Activated T-helper 2 cell treated with anti-CD3 and anti-CD28 coated beads, Interferon-gamma antibody, Interleukin-2, Interleukin-4, amounts not matched to agents 10 μg/mL and 5 μg/mL and 100 μg/mL, durations not matched to agents 14 hours and 24 hours and 36 hours (primary cell): ENCODE measurements at regions of chr2 and their contacts with region 1.

Region 1: GRCh38 chr2:54723131-54723995 is at the start of gene EML6:
- DNase-seq: peak; percentile 99
- H3K4me3 Mint-ChIP-seq: peak within 1 kb of the TSS; percentile 89
- H3K27ac Mint-ChIP-seq: peak within 1 kb of the TSS; percentile 64
- H3K4me1 Mint-ChIP-seq: peaks cover 17% of the 10 kb centered on the region
- H3K27me3 Mint-ChIP-seq: peaks cover 77% of the 10 kb centered on the region
- total RNA-seq, gene EML6: 0.23 and 0.25 TPM in 2 replicates

Region 2: DNA sequence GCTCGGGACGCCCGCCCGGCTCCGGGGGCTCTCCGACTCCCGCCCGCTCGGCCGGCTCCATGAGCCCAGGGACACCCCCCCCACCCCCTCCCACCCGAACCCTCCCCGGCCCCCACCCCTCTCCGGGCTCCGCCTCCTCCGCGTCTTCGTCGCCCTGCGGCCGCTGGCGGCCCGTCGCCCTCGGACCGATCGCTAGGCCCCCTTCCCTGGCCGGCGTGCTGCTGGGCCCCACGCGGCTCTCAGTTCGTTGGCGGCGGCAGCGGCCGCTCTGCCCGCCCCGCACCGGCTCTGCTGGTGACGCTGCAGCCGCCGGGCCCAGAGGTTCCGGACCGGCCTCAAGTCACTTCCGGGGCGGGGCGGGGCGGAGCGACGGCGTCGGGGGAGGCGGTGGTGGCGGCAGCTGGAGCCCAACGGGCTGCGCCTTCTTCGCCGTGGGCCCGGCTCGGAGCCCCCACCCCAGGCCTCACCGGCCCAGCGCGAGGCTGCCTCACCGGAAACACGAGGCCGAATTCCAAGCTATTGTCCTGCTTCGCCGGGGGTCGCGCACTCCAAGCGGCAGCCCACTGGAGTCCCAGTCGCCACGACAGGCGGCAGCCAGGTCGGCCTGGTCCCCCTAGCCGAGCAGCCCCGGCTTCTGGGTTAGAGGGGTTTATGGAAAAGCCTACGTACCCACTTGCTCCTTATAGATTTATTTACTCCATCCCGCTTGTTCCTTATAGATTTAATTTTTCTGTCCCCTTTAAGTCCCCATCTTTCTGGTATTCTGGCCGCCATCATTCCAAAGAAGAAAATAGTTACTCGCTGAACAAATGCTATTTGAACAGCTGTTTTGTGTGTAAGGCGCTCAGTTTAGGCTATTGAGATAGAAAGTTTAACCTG is 752.4 kb before region 1 on chr2 and contains the start of gene PSME4:
- intact Hi-C with region 1: loop called (anchors 5 kb)
- DNase-seq: peak; percentile 90
- H3K4me3 Mint-ChIP-seq: peak within 1 kb of the TSS; percentile 93
- H3K27ac Mint-ChIP-seq: peak within 1 kb of the TSS; percentile 96
- H3K4me1 Mint-ChIP-seq: peaks cover 30% of the 10 kb centered on the region
- H3K27me3 Mint-ChIP-seq: no peaks in the 10 kb centered on the region
- total RNA-seq, gene PSME4: 52.0 and 57.3 TPM in 2 replicates

Region 3: GRCh38 chr2:54330162-54330925 is 393.0 kb before region 1 on chr2:
- intact Hi-C with region 1: loop called (anchors 2 kb)
- DNase-seq: peak; percentile 85
- H3K4me3 Mint-ChIP-seq: peak overlapping the region; percentile 72
- H3K27ac Mint-ChIP-seq: no peak overlapping the region
- H3K4me1 Mint-ChIP-seq: peaks cover 16% of the 10 kb centered on the region
- H3K27me3 Mint-ChIP-seq: peaks cover 28% of the 10 kb centered on the region

Region 4: GRCh38 chr2:54763636-54764291 is 40.4 kb after region 1 on chr2:
- intact Hi-C with region 1: loop called (anchors 2 kb)
- DNase-seq: no peak
- H3K4me3 Mint-ChIP-seq: no peak overlapping the region
- H3K27ac Mint-ChIP-seq: no peak overlapping the region
- H3K4me1 Mint-ChIP-seq: peaks cover 10% of the 10 kb centered on the region
- H3K27me3 Mint-ChIP-seq: peaks cover 7% of the 10 kb centered on the region

Region 5: DNA sequence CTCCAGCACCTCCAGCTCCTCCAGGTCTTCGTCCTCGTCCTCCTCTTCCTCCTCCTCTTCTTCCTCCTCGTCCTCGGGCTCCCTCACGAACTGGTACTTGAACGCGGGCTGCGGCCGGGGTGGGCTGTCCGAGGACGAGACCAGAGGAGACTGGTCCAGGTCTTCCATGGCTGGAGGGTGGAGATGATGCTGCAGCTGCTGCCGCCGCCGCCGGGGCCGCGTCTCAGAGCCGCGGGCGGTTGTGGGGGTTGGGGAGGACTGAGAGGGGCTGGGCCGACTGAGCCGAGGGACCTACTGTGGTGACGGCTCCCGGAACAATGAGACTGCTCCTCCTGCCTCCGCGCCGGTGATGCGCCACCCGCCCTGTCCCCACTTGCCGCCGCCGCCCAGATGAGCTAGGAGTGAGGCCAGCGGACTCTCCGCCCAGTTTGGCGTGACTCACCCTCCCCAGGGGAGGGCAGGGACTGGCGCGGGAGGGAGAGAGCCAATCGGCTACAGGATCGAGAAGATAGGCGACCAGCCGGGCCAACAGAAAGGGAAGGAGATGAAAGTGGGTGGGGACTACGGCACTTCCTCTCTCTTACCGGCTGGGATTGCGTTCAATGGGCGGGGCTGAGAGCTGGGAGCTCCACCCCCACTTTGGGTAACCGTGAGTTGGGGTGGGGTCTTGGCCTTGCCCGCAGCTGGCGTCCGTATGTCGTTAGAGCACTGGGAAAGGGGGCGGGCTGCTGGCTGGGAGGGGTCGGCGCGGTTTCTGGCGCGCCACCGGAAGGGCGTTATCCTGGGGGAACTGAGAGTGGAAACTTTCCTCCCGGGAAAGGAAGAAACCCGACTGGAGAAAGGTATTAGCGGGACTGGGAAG is 327.0 kb after region 1 on chr2 and contains the start of gene RTN4:
- intact Hi-C with region 1: loop called (anchors 1 kb)
- DNase-seq: peak; percentile 99
- H3K4me3 Mint-ChIP-seq: peak within 1 kb of the TSS; percentile 99
- H3K27ac Mint-ChIP-seq: peak within 1 kb of the TSS; percentile 99
- H3K4me1 Mint-ChIP-seq: peaks cover 61% of the 10 kb centered on the region
- H3K27me3 Mint-ChIP-seq: no peaks in the 10 kb centered on the region
- total RNA-seq, gene RTN4: 91.2 and 93.3 TPM in 2 replicates

Region 6: GRCh38 chr2:55223958-55224760 is 500.8 kb after region 1 on chr2:
- intact Hi-C with region 1: loop called (anchors 1 kb)
- DNase-seq: no peak
- H3K4me3 Mint-ChIP-seq: peak overlapping the region; percentile 66
- H3K27ac Mint-ChIP-seq: peak overlapping the region; percentile 73
- H3K4me1 Mint-ChIP-seq: peaks cover 29% of the 10 kb centered on the region
- H3K27me3 Mint-ChIP-seq: no peaks in the 10 kb centered on the region